ENCODE measurements at regions of chr15 and their contacts with region 1.

Region 1: DNA sequence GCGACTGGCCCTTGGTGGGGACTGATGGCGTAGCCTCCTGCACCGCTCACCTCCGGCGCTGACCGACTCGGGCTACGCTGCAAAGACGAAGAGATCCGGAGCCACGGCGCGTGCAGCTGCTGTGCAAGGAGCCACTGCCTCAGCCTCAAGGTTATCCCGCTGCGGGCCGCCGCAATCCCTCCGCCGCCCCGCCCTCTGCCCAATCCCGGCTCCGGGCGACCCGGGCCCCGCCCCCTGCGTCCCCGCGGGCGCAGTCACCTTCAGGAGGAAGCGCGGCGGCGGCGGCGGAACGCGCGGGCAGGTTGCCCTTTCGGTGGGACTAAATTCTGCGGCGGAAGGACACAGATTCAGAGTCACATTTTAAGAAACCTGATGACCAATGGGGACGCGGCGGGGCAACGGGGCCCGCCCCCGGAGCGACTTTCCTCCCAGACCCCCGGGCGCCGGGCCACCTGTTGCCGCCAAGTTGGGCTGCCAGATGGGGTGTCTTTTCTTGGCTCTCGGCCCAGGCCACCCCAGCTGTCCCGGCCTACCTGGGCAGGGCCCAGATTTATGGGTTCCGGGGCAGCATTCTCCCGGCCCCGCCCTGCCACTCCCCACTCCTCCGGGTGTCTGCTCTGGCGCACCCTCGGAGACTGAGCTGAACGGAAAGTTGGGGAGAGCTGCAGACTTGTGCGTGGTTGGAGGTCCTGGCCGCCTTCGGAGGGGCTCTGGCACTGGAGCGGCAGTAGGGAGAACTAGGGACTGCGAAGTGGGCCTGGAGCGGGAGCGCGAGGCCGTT is at the start of gene PKM:
- DNase-seq: peak; percentile 99
- H3K4me3 ChIP-seq: peak within 1 kb of the TSS; percentile 91
- H3K27ac ChIP-seq: peak within 1 kb of the TSS; percentile 92
- H3K4me1 ChIP-seq: peaks cover 27% of the 10 kb centered on the region
- H3K27me3 ChIP-seq: no peaks in the 10 kb centered on the region
- CTCF ChIP-seq: no peak
- total RNA-seq, gene PKM: 1,606 and 1,955 TPM in 2 replicates

Region 2: DNA sequence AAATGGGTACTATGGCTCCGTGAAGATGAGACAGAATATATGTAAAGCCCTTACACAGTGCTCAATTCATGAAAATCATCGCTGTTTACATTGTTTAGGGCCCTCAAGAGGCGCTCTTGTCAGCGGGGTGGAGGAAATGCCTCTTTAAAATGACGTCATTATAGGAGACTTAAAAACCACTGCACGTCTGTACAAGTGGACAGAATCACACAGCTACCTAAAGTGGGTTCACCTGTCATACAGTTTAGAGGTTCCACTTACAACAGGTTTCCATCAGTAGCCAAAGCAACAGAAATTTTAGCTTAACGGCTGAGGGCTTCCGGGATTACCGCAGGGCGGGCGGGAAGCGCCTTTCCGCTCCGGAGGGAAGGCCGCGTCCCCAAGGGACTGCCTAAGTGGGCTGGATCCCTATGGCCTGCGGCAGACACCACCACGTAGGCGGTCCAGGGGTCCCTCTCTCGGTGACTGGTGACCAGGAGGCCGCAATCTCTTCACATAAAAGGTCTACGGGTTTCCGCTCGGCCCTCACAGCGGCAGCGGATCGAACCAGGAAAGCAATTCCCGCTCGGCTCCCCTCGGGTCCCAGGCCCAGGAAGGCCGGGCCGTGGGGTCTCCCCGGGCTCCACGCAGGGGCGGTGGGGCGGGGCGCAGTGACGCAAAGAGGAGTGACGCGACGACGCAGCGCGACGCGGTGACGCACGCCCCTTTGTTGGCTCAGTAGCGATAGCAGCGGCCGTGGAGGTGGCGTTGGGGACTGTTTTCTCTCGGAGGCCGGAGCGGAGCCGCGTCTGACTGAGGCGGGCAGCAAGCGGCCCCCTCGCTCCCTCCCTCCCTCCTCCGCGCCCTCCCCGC is 242.6 kb after region 1 on chr15 and contains the start of gene ARIH1:
- CTCF ChIA-PET with region 1: no interaction called
- POLR2A ChIA-PET with region 1: no interaction called
- intact Hi-C with region 1: loop called (anchors 10 kb)
- DNase-seq: peak; percentile 97
- H3K4me3 ChIP-seq: peak within 1 kb of the TSS; percentile 96
- H3K27ac ChIP-seq: peak within 1 kb of the TSS; percentile 99
- H3K4me1 ChIP-seq: peaks cover 8% of the 10 kb centered on the region
- H3K27me3 ChIP-seq: no peaks in the 10 kb centered on the region
- CTCF ChIP-seq: peak; percentile 39; the same call in 1 of the 2 replicates
- total RNA-seq, gene ARIH1: 181 and 187 TPM in 2 replicates